IMR-90 (cell line): ENCODE measurements at regions of chr9 and their contacts with region 1.

Region 1: GRCh38 chr9:122445155-122445749 is 32.5 kb downstream of the OR1J1 start:
- DNase-seq: peak; percentile 99
- ATAC-seq: peak; percentile 88
- H3K4me3 ChIP-seq: no peak overlapping the region
- H3K27ac ChIP-seq: peak overlapping the region; percentile 89
- H3K4me1 ChIP-seq: peaks cover 16% of the 10 kb centered on the region
- H3K27me3 ChIP-seq: no peaks in the 10 kb centered on the region
- CTCF ChIP-seq: peak; percentile 34; the same call in 1 of the 2 replicates
- POLR2A ChIP-seq: no peak
- RAD21 ChIP-seq: peak; percentile 24; the same call in 1 of the 2 replicates

Region 2: GRCh38 chr9:122402403-122402871 is 42.8 kb before region 1 on chr9:
- CTCF ChIA-PET with region 1: interaction called, 3 read pairs
- POLR2A ChIA-PET with region 1: no interaction called
- dilution Hi-C with region 1: no loop called
- in situ Hi-C with region 1: loop called (anchors 5 kb)
- intact Hi-C with region 1: loop called (anchors 1 kb)
- DNase-seq: peak; percentile 99
- ATAC-seq: peak; percentile 87
- H3K4me3 ChIP-seq: no peak overlapping the region
- H3K27ac ChIP-seq: peak overlapping the region; percentile 90
- H3K4me1 ChIP-seq: peaks cover 10% of the 10 kb centered on the region
- H3K27me3 ChIP-seq: no peaks in the 10 kb centered on the region
- CTCF ChIP-seq: no peak
- POLR2A ChIP-seq: peak; percentile 61; the same call in 1 of the 2 replicates
- RAD21 ChIP-seq: peak; percentile 34

Region 3: DNA sequence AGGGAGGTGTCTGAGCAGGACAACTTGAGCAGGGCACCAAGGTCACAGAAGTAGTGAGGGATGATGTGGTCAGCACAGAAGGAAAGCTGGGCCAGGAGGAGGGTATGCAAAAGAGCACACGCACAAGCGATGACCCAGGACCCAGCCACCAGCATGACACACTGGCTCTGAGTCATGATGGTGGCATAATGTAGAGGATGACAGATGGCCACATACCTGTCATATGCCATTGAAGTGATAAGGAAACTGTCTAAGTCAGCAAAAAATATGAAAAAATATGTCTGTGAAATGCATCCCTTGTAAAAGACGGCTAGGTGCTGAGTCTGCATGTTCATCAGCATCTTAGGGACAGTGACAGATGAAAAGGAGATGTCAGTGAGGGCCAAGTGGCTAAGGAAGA is 32.1 kb after region 1 on chr9:
- CTCF ChIA-PET with region 1: no interaction called
- POLR2A ChIA-PET with region 1: no interaction called
- dilution Hi-C with region 1: no loop called
- in situ Hi-C with region 1: no loop called
- intact Hi-C with region 1: no loop called
- DNase-seq: no peak
- ATAC-seq: no peak
- H3K4me3 ChIP-seq: no peak overlapping the region
- H3K27ac ChIP-seq: no peak overlapping the region
- H3K4me1 ChIP-seq: peaks cover 6% of the 10 kb centered on the region
- H3K27me3 ChIP-seq: peaks cover 1% of the 10 kb centered on the region; the same call in 1 of the 2 replicates
- CTCF ChIP-seq: no peak
- POLR2A ChIP-seq: no peak
- RAD21 ChIP-seq: no peak